Gastrocnemius medialis (tissue), 4 donors: ENCODE measurements at regions of chr17 and their contacts with region 1.

Region 1: GRCh38 chr17:75405365-75406221 is at the start of gene GRB2:
- DNase-seq: peak; percentile 97 to 98
- ATAC-seq: peak; percentile 91 to 93
- H3K4me3 ChIP-seq: peak within 1 kb of the TSS; percentile 80 to 96 (median 91)
- H3K27ac ChIP-seq: peak within 1 kb of the TSS; percentile 91 to 95 (median 92)
- H3K4me1 ChIP-seq: peaks cover 30 to 34% of the 10 kb centered on the region in 2 donors
- H3K27me3 ChIP-seq: no peaks in the 10 kb centered on the region
- CTCF ChIP-seq: no peak
- POLR2A ChIP-seq: peak; percentile 82 to 87
- total RNA-seq, gene GRB2: 41.7 to 88.5 (median 68.8) TPM

Region 2: GRCh38 chr17:75289115-75289831 is 116.3 kb before region 1 on chr17 and contains the start of gene SLC25A19:
- in situ Hi-C with region 1: no loop called
- intact Hi-C with region 1: loop called (anchors 1 kb)
- DNase-seq: peak; percentile 99
- ATAC-seq: peak; percentile 95 to 98
- H3K4me3 ChIP-seq: peak within 1 kb of the TSS; percentile 84 to 92 (median 86)
- H3K27ac ChIP-seq: peak within 1 kb of the TSS; percentile 88 to 96 (median 94)
- H3K4me1 ChIP-seq: peaks cover 8 to 9% of the 10 kb centered on the region in 2 donors
- H3K27me3 ChIP-seq: no peaks in the 10 kb centered on the region
- CTCF ChIP-seq: no peak
- POLR2A ChIP-seq: peak; percentile 93 to 98
- total RNA-seq, gene SLC25A19: 6.1 to 18.7 (median 14.4) TPM

Region 3: DNA sequence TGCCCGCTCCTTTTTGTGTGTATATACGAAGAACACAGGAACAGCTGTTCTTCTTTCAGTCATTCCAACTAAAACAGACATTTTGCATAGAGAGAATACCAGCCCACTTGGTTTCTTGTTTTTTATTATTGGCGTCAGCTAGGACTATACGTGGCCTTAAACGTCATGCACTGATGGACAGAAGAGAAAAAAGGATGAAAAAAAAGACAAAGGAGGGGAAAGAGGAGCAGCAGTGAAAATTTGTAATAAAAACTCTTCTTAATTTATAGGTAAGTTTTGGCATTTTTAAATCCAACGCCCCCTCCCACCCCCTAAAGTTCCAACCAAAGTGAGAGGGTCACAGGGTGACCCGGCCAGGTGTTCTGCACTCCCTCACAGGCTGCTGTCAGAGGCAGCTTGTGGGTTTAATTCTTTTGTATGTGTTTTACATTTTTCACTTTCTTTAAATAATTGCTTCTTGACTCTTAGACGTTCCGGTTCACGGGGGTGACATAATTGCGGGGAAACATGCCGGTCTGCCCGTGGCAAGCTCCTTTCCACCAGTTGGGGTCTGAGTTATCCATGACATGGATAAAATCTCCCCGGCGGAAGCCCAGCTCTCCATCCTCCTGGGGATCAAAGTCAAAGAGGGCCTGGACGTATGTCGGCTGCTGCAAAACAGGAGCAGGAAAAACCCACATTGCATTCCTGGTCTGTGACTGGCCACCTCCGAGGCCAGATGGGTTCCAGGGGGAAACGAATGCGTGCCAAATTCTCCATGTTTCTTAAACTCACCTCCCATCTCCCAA is 85.5 kb before region 1 on chr17:
- in situ Hi-C with region 1: loop called in 3 of 4 experiments (anchors 5 to 10 kb)
- intact Hi-C with region 1: loop called (anchors 1 kb)
- DNase-seq: no peak
- ATAC-seq: no peak
- H3K4me3 ChIP-seq: no peak overlapping the region
- H3K27ac ChIP-seq: no peak overlapping the region
- H3K4me1 ChIP-seq: peaks cover 6 to 8% of the 10 kb centered on the region in 2 donors
- H3K27me3 ChIP-seq: no peaks in the 10 kb centered on the region
- CTCF ChIP-seq: no peak
- POLR2A ChIP-seq: no peak

Region 4: GRCh38 chr17:75325827-75326225 is 79.8 kb before region 1 on chr17:
- in situ Hi-C with region 1: loop called (anchors 5 to 10 kb)
- intact Hi-C with region 1: loop called (anchors 1 kb)
- DNase-seq: no peak
- ATAC-seq: no peak
- H3K4me3 ChIP-seq: no peak overlapping the region
- H3K27ac ChIP-seq: peak overlapping the region in 3 of 4 donors; percentile 15 to 26 (median 15)
- H3K4me1 ChIP-seq: peaks cover 8 to 12% of the 10 kb centered on the region in 2 donors
- H3K27me3 ChIP-seq: no peaks in the 10 kb centered on the region
- CTCF ChIP-seq: no peak
- POLR2A ChIP-seq: no peak

Region 5: DNA sequence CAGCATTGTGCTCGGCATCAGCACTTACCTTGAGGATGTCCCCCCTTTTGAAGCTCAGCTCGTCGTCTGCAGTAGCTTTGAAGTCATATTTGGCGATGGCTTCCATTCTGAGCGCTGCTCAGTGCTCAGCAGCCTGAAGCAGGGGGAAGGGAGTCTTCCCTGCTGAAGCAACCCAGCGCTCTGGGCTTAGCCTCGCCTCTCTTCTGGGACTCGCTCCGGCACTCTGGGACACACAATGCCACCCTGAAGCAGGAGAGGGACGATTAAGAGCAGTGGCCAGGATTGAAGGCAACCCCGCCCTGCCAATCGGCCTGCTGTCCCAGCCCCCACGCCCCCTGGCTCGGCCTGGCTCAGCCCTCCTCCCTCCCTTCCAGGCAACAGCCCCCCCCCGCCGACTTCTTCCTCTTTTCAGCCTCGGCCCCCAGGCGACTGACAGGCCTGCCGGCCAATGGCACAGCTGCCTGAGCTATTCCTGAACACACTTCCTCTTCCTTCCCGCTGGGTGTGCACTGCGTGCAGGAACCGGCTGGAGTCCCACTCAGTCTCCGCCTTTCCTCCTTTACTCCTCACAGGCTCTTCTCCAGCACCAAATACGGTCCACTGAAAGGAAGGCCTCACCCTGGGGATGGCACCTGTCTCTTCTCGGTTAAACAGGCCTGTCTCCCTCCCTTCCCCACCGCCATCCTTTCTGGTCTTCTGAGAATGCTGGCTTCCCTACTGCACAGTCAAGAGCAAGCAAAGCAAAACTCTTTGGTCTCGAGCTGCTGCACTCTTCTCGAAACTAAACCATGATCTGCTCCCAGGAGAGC is 11.9 kb before region 1 on chr17:
- in situ Hi-C with region 1: no loop called
- intact Hi-C with region 1: loop called (anchors 1 kb)
- DNase-seq: peak; percentile 96 to 98
- ATAC-seq: peak; percentile 97 to 98
- H3K4me3 ChIP-seq: peak overlapping the region; percentile 58 to 85 (median 66)
- H3K27ac ChIP-seq: peak overlapping the region; percentile 83 to 91 (median 87)
- H3K4me1 ChIP-seq: peaks cover 63 to 70% of the 10 kb centered on the region in 2 donors
- H3K27me3 ChIP-seq: no peaks in the 10 kb centered on the region
- CTCF ChIP-seq: peak in 2 of 5 experiments; percentile 25 to 50
- POLR2A ChIP-seq: peak; percentile 51 to 68